GM12878 (cell line): ENCODE measurements at regions of chr17 and their contacts with region 1.

Region 1: DNA sequence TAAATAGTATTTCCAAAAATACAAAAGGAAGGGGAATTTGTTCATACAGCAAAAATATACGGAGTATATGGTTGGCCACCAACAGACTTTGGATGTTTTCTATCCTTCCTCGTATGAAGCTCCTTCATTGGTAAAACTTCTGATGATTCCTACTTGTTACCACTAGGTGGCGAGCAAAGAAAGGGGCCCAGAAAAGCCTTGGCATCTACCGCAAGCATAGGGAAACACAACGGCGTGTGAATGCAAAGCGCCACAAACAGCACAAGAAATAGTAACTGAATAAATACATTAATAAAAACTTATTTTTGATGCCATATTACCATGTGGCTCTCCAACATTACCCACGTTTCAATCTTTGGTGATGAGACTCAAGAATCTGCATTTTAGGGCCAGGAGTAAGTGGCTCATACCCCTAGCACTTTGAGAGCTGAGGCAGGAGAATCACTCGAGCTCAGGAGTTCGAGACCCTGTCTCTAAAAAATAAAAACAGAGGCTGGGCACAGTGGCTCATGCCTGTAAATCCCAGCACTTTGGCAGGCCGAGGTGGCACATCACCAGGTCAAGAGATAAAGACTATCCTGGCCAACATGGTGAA is 34.5 kb downstream of the YWHAE start:
- DNase-seq: peak; percentile 46
- ATAC-seq: peak; percentile 81
- H3K4me3 ChIP-seq: no peak overlapping the region
- H3K27ac ChIP-seq: peak overlapping the region; percentile 37; the same call in 1 of the 2 replicates
- H3K4me1 ChIP-seq: peaks cover 33% of the 10 kb centered on the region
- H3K27me3 ChIP-seq: no peaks in the 10 kb centered on the region
- CTCF ChIP-seq: peak; percentile 86 to 91 (median 89)
- EP300 ChIP-seq: no peak
- POLR2A ChIP-seq: no peak
- RAD21 ChIP-seq: peak; percentile 92

Region 2: GRCh38 chr17:350706-351448 is 1014.7 kb before region 1 on chr17:
- CTCF ChIA-PET with region 1: no interaction called
- POLR2A ChIA-PET with region 1: no interaction called
- RAD21 ChIA-PET with region 1: no interaction called
- SMC1A ChIA-PET with region 1: no interaction called
- in situ Hi-C with region 1: no loop called
- intact Hi-C with region 1: no loop called
- DNase-seq: no peak
- ATAC-seq: no peak
- H3K4me3 ChIP-seq: no peak overlapping the region
- H3K27ac ChIP-seq: no peak overlapping the region
- H3K4me1 ChIP-seq: no peaks in the 10 kb centered on the region
- H3K27me3 ChIP-seq: no peaks in the 10 kb centered on the region; a peak in 1 of 4 replicates
- CTCF ChIP-seq: no peak
- EP300 ChIP-seq: no peak
- POLR2A ChIP-seq: no peak
- RAD21 ChIP-seq: no peak

Region 3: GRCh38 chr17:1340371-1340770 is 25.2 kb before region 1 on chr17:
- CTCF ChIA-PET with region 1: interaction called, 12 read pairs
- POLR2A ChIA-PET with region 1: interaction called, 14 read pairs
- RAD21 ChIA-PET with region 1: no interaction called
- SMC1A ChIA-PET with region 1: interaction called, 6 read pairs
- in situ Hi-C with region 1: no loop called
- intact Hi-C with region 1: no loop called
- DNase-seq: no peak
- ATAC-seq: no peak
- H3K4me3 ChIP-seq: no peak overlapping the region
- H3K27ac ChIP-seq: no peak overlapping the region
- H3K4me1 ChIP-seq: peaks cover 9% of the 10 kb centered on the region
- H3K27me3 ChIP-seq: no peaks in the 10 kb centered on the region
- CTCF ChIP-seq: no peak
- EP300 ChIP-seq: no peak
- POLR2A ChIP-seq: no peak
- RAD21 ChIP-seq: no peak

Region 4: GRCh38 chr17:1390433-1391367 is 25.2 kb after region 1 on chr17:
- CTCF ChIA-PET with region 1: interaction called, 61 read pairs
- POLR2A ChIA-PET with region 1: interaction called, 12 read pairs
- RAD21 ChIA-PET with region 1: interaction called, 27 read pairs
- SMC1A ChIA-PET with region 1: interaction called, 29 read pairs
- in situ Hi-C with region 1: no loop called
- intact Hi-C with region 1: no loop called
- DNase-seq: no peak
- ATAC-seq: no peak
- H3K4me3 ChIP-seq: 0 out of 2 replicates have a peak overlapping the region, but pooled peaks have one; percentile 5
- H3K27ac ChIP-seq: no peak overlapping the region
- H3K4me1 ChIP-seq: no peaks in the 10 kb centered on the region; the same call in 1 of the 2 replicates
- H3K27me3 ChIP-seq: no peaks in the 10 kb centered on the region
- CTCF ChIP-seq: no peak
- EP300 ChIP-seq: no peak
- POLR2A ChIP-seq: no peak
- RAD21 ChIP-seq: no peak

Region 5: DNA sequence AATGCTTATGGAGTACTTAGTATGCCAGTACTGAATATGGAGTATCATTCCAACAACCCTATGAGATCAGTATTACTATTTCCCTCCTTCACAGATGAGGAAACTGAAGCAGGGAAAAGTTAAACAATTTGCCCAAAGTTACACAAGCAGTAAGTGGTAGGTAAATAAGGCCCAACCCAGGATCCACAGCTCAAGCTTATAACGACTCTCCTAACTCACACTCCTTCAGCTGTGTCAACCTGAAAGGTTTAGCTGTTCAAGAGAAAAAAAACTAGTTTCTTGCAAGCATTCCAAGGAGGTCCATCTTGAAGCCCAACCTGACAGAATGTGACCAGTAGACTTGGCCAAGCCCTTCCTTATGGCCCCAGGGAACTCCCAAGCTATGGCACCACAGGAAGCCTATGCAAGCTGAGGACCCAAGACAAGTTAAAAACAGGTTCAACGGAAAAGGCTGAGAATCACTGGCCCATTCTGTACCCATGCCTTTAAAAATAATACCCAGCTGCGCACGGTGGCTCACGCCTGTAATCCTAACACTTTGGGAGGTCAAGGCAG is 84.0 kb after region 1 on chr17:
- CTCF ChIA-PET with region 1: interaction called, 16 read pairs
- POLR2A ChIA-PET with region 1: interaction called, 4 read pairs
- RAD21 ChIA-PET with region 1: interaction called, 11 read pairs
- SMC1A ChIA-PET with region 1: interaction called, 8 read pairs
- in situ Hi-C with region 1: no loop called
- intact Hi-C with region 1: no loop called
- DNase-seq: no peak
- ATAC-seq: no peak
- H3K4me3 ChIP-seq: no peak overlapping the region
- H3K27ac ChIP-seq: no peak overlapping the region
- H3K4me1 ChIP-seq: no peaks in the 10 kb centered on the region
- H3K27me3 ChIP-seq: no peaks in the 10 kb centered on the region
- CTCF ChIP-seq: no peak
- EP300 ChIP-seq: no peak
- POLR2A ChIP-seq: no peak
- RAD21 ChIP-seq: no peak

Region 6: DNA sequence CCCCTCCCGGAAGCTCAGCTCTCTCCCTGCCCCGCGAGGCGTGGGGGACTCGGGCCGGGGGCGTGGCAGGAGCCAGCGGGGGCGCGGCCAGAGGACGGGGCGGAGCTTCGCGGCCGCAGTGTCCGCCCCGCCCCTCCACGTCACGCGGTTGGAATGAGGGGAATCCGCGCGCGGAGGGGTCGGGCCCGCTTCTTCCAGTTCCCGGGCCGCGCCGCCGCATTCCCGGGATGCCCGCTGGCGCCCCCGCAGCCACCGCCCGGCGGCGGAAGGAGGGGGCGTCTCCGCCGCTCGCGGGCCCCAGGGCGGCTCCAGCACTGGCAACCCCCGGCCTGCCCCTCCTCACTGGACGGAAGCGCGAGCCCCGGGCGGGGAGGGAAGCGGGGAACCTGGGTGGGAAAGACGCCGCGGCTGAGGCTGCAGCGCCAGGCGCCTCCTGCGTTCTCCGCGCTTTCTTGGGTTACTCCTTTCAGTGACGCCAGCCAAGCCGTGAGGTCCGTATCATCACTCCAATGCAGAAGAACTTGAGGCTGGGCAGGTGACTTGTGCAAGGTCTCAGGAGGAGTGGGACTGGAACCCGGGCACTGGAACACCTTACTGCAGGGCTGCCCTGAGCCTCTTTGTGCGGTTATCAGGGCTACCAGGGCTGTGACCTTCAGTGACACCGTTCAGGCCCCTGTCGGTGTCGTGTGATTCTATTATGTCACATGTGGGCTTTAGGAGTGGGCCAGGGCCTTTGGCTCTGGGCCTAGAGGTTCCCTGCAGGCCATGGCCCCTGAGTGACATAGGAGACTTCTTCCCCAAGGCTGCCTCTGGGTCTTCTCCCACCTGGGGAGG is 122.7 kb after region 1 on chr17:
- CTCF ChIA-PET with region 1: interaction called, 7 read pairs
- POLR2A ChIA-PET with region 1: no interaction called
- RAD21 ChIA-PET with region 1: interaction called, 10 read pairs
- SMC1A ChIA-PET with region 1: interaction called, 20 read pairs
- in situ Hi-C with region 1: no loop called
- intact Hi-C with region 1: no loop called
- DNase-seq: no peak
- ATAC-seq: peak; percentile 53
- H3K4me3 ChIP-seq: peak overlapping the region; percentile 68
- H3K27ac ChIP-seq: peak overlapping the region; percentile 84
- H3K4me1 ChIP-seq: peaks cover 22% of the 10 kb centered on the region
- H3K27me3 ChIP-seq: no peaks in the 10 kb centered on the region
- CTCF ChIP-seq: no peak
- EP300 ChIP-seq: no peak
- POLR2A ChIP-seq: no peak
- RAD21 ChIP-seq: no peak

Region 7: GRCh38 chr17:1532836-1533602 is 167.5 kb after region 1 on chr17:
- CTCF ChIA-PET with region 1: interaction called, 22 read pairs
- POLR2A ChIA-PET with region 1: no interaction called
- RAD21 ChIA-PET with region 1: interaction called, 12 read pairs
- SMC1A ChIA-PET with region 1: interaction called, 6 read pairs
- in situ Hi-C with region 1: no loop called
- intact Hi-C with region 1: no loop called
- DNase-seq: no peak
- ATAC-seq: peak; percentile 86
- H3K4me3 ChIP-seq: no peak overlapping the region
- H3K27ac ChIP-seq: no peak overlapping the region
- H3K4me1 ChIP-seq: no peaks in the 10 kb centered on the region
- H3K27me3 ChIP-seq: no peaks in the 10 kb centered on the region
- CTCF ChIP-seq: peak; percentile 45 to 63 (median 57); a peak in 5 of 6 replicates
- EP300 ChIP-seq: no peak
- POLR2A ChIP-seq: no peak
- RAD21 ChIP-seq: peak; percentile 50

Region 8: DNA sequence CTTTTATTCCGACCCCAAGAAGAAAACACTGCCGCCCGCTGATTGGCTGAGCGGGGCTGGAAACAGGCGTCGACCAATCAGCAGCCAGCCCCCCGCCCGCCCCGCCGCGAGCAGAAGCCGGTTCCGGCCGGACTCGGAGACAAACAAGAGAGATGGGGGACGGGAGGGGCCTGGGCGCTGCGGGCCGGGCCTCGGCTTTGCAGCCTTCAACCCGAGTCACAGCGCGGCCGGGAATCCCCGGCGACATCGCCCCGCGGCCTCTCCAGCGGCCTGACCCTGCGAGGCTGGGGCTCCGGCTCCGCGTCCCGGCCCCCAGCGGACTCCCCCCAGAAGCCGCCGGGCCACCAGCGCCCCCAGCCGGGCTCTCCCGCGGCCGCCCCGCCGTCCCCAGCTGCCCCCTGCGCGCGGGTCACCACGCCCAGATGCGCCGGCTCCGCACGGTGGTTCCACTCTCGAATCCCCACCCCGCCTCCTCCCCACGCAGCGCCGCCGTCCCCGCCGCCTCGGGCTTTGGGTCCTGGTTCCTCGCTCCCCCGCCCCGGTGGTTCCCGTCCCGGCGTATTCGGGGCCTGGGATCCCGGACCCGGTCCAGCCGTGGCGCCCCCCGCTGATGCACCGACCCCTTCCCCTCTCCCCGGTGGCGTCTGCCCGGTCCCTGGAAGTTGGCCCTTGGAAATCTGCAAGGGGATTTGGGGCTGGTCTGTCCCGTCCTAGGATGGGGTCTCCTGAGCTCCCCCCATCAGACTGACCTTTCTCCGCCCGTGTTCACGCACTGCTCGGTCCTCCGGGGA is 263.5 kb after region 1 on chr17:
- CTCF ChIA-PET with region 1: interaction called, 16 read pairs
- POLR2A ChIA-PET with region 1: interaction called, 3 read pairs
- RAD21 ChIA-PET with region 1: interaction called, 11 read pairs
- SMC1A ChIA-PET with region 1: interaction called, 7 read pairs
- in situ Hi-C with region 1: no loop called
- intact Hi-C with region 1: no loop called
- DNase-seq: no peak
- ATAC-seq: peak; percentile 84
- H3K4me3 ChIP-seq: peak overlapping the region; percentile 88
- H3K27ac ChIP-seq: peak overlapping the region; percentile 87
- H3K4me1 ChIP-seq: peaks cover 42% of the 10 kb centered on the region
- H3K27me3 ChIP-seq: no peaks in the 10 kb centered on the region
- CTCF ChIP-seq: peak in 2 of 3 experiments; percentile 30 to 51; a peak in 4 of 6 replicates
- EP300 ChIP-seq: no peak
- POLR2A ChIP-seq: peak; percentile 70
- RAD21 ChIP-seq: peak; percentile 40; the same call in 1 of the 2 replicates